ENCODE measurements at regions of chr19 and their contacts with region 1.

Region 1: DNA sequence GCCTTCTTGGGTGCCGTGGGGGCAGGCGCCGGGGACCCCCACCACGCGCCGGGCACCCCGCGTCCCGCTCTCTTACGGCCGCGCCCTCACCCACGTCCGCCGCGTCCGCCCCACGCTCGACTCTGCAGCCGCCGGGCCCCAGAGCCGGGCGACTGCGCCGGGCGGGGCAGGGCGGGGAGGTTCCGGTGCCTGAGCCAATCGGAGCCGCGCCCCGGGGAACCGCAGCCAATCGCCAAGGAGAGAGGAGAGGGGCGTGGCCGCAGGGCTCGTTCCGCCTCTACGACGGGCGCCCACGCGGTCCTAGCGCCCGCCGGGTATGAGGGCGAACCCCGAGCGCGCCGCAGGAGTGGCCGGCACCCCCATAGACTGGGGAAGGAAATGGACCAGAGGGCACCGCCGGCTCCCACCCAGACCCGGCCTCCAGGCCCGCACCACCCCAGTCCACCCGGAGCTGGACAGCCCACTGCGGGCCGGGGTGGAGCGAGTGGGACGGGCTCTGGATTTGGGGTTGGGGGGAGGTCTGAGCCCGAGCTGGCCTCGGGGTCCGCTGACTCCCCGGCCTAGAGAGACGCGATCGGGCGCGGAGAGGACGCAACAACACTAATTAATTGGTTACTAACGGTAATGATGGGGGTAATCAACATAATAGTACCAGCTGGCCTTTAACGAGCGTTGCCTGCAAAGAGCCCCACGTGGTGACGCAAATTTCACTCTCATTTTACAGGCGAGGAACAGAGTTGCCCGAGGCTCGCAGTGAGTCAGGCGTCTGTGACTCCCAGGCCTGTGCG is at the start of gene MFSD12:
- DNase-seq: peak; percentile 95
- ATAC-seq: peak; percentile 88
- H3K4me3 ChIP-seq: peak within 1 kb of the TSS; percentile 36 to 87 (median 72)
- H3K4me3 Mint-ChIP-seq: peak within 1 kb of the TSS; percentile 99
- H3K27ac ChIP-seq: peak within 1 kb of the TSS; percentile 48 to 87
- H3K27ac Mint-ChIP-seq: peak within 1 kb of the TSS; percentile 94
- H3K4me1 ChIP-seq: peaks cover 42 to 60% of the 10 kb centered on the region in 2 donors
- H3K4me1 Mint-ChIP-seq: peaks cover 43% of the 10 kb centered on the region
- H3K27me3 ChIP-seq: no peaks in the 10 kb centered on the region
- H3K27me3 Mint-ChIP-seq: no peaks in the 10 kb centered on the region
- CTCF ChIP-seq: no peak
- total RNA-seq, gene MFSD12: 99.6 and 100 TPM in 2 replicates

Region 2: GRCh38 chr19:3434712-3435553 is 122.7 kb before region 1 on chr19:
- CTCF ChIA-PET with region 1: no interaction called
- POLR2A ChIA-PET with region 1: no interaction called
- intact Hi-C with region 1: no loop called
- DNase-seq: peak; percentile 99
- ATAC-seq: peak; percentile 92
- H3K4me3 ChIP-seq: peak overlapping the region; percentile 55 to 89 (median 78)
- H3K4me3 Mint-ChIP-seq: peak overlapping the region; percentile 100
- H3K27ac ChIP-seq: peak overlapping the region; percentile 87 to 96
- H3K27ac Mint-ChIP-seq: peak overlapping the region; percentile 99
- H3K4me1 ChIP-seq: peaks cover 9 to 15% of the 10 kb centered on the region in 2 donors
- H3K4me1 Mint-ChIP-seq: peaks cover 13% of the 10 kb centered on the region
- H3K27me3 ChIP-seq: no peaks in the 10 kb centered on the region
- H3K27me3 Mint-ChIP-seq: no peaks in the 10 kb centered on the region
- CTCF ChIP-seq: no peak

Region 3: GRCh38 chr19:3526507-3527244 is 31.0 kb before region 1 on chr19:
- CTCF ChIA-PET with region 1: no interaction called
- POLR2A ChIA-PET with region 1: no interaction called
- intact Hi-C with region 1: no loop called
- DNase-seq: no peak
- ATAC-seq: no peak
- H3K4me3 ChIP-seq: no peak overlapping the region
- H3K4me3 Mint-ChIP-seq: no peak overlapping the region
- H3K27ac ChIP-seq: no peak overlapping the region
- H3K27ac Mint-ChIP-seq: no peak overlapping the region
- H3K4me1 ChIP-seq: no peaks in the 10 kb centered on the region
- H3K4me1 Mint-ChIP-seq: no peaks in the 10 kb centered on the region
- H3K27me3 ChIP-seq: no peaks in the 10 kb centered on the region
- H3K27me3 Mint-ChIP-seq: no peaks in the 10 kb centered on the region
- CTCF ChIP-seq: no peak

Region 4: GRCh38 chr19:3544742-3545668 is 12.7 kb before region 1 on chr19:
- CTCF ChIA-PET with region 1: interaction called, 37 read pairs
- POLR2A ChIA-PET with region 1: no interaction called
- intact Hi-C with region 1: no loop called
- DNase-seq: peak; percentile 78
- ATAC-seq: peak; percentile 78
- H3K4me3 ChIP-seq: no peak overlapping the region
- H3K4me3 Mint-ChIP-seq: no peak overlapping the region
- H3K27ac ChIP-seq: no peak overlapping the region
- H3K27ac Mint-ChIP-seq: peak overlapping the region; percentile 86
- H3K4me1 ChIP-seq: no peaks in the 10 kb centered on the region
- H3K4me1 Mint-ChIP-seq: peaks cover 8% of the 10 kb centered on the region
- H3K27me3 ChIP-seq: no peaks in the 10 kb centered on the region
- H3K27me3 Mint-ChIP-seq: no peaks in the 10 kb centered on the region
- CTCF ChIP-seq: peak; percentile 90

Region 5: DNA sequence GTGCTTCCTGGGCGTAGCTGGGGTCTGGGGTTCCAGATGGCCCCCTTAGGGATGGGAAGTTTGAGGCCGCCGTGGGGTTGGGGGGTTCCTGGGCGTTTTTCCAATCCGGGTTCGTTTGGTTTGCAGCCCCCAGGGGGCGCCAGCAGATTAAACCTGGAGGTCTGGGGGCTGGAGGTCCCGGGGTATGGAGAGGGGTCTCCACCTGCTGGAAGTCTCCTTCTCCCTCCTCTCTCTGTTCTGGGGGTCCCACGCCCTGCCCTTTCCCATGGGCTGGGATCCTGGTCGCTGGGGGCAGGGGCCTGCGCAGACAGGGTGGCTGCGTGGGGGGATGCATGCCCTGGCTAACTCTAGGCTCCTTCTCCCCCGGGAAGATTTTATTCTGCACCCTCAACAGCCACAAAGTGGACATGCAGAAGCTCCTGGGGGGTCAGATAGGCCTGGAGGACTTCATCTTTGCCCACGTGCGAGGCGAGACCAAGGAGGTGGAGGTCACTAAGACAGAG is 28.5 kb after region 1 on chr19:
- CTCF ChIA-PET with region 1: interaction called, 12 read pairs
- POLR2A ChIA-PET with region 1: no interaction called
- intact Hi-C with region 1: no loop called
- DNase-seq: peak; percentile 60
- ATAC-seq: peak; percentile 36
- H3K4me3 ChIP-seq: peak overlapping the region in 4 of 5 experiments; percentile 37 to 51 (median 42)
- H3K4me3 Mint-ChIP-seq: peak overlapping the region; percentile 66
- H3K27ac ChIP-seq: no peak overlapping the region
- H3K27ac Mint-ChIP-seq: no peak overlapping the region
- H3K4me1 ChIP-seq: peaks cover 8 to 12% of the 10 kb centered on the region in 2 donors
- H3K4me1 Mint-ChIP-seq: no peaks in the 10 kb centered on the region
- H3K27me3 ChIP-seq: peaks cover 0 to 13% (median 6%) of the 10 kb centered on the region in 4 experiments
- H3K27me3 Mint-ChIP-seq: no peaks in the 10 kb centered on the region
- CTCF ChIP-seq: peak; percentile 69

Region 6: GRCh38 chr19:3626473-3627350 is 69.1 kb after region 1 on chr19 and contains the start of gene CACTIN:
- CTCF ChIA-PET with region 1: no interaction called
- POLR2A ChIA-PET with region 1: no interaction called
- intact Hi-C with region 1: loop called (anchors 1 kb)
- DNase-seq: peak; percentile 99
- ATAC-seq: peak; percentile 98
- H3K4me3 ChIP-seq: peak within 1 kb of the TSS; percentile 70 to 98 (median 76)
- H3K4me3 Mint-ChIP-seq: peak within 1 kb of the TSS; percentile 96
- H3K27ac ChIP-seq: peak within 1 kb of the TSS; percentile 96 to 98
- H3K27ac Mint-ChIP-seq: peak within 1 kb of the TSS; percentile 100
- H3K4me1 ChIP-seq: peaks cover 17 to 21% of the 10 kb centered on the region in 2 donors
- H3K4me1 Mint-ChIP-seq: peaks cover 26% of the 10 kb centered on the region
- H3K27me3 ChIP-seq: no peaks in the 10 kb centered on the region
- H3K27me3 Mint-ChIP-seq: no peaks in the 10 kb centered on the region
- CTCF ChIP-seq: no peak
- total RNA-seq, gene CACTIN: 41.8 and 48.0 TPM in 2 replicates

Measured in B cell (primary cell).